G401 (cell line): ENCODE measurements at regions of chr10 and their contacts with region 1.

Region 1: GRCh38 chr10:84499846-84500245 is 171.5 kb downstream of the CCSER2 start:
- DNase-seq: peak; percentile 37

Region 2: DNA sequence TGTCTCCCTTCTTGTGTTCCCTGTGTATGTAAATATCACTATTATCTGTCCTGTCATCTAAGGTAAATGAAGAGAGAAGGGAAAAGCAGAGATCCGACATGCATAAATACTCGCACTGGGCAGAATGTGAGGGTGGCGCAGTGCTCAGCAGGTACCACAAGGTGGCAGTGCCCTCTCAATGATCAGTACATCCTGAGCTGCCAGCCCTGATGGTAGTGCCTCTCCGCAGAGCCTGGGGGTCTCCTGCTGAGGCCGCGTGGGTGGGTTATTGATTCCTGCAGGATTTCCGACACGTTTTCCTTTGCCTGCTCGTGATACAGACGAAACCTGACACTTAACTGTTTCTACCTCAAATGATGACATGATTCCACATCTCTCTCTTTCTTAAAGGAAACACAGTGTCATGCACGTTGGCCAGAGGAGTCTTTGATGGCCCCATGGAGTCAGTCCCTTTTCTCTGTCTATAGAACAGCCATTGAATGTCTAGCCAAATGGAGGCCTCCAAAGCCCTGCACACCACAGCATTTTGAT is 235.2 kb before region 1 on chr10:
- in situ Hi-C with region 1: loop called (anchors 25 kb)
- DNase-seq: peak; percentile 79